ENCODE measurements at regions of chr5 and their contacts with region 1.

Region 1: GRCh38 chr5:98651715-98652114 is 121.7 kb upstream of the RGMB start:
- DNase-seq: no peak
- ATAC-seq: no peak
- H3K4me3 ChIP-seq: no peak overlapping the region
- H3K27ac ChIP-seq: no peak overlapping the region
- H3K4me1 ChIP-seq: no peaks in the 10 kb centered on the region
- H3K27me3 ChIP-seq: no peaks in the 10 kb centered on the region

Region 2: GRCh38 chr5:98663521-98663920 is 11.8 kb after region 1 on chr5:
- intact Hi-C with region 1: loop called in 1 of 4 experiments (anchors 2 kb)
- DNase-seq: peak in 1 of 3 donors; percentile 16
- ATAC-seq: no peak
- H3K4me3 ChIP-seq: no peak overlapping the region
- H3K27ac ChIP-seq: no peak overlapping the region
- H3K4me1 ChIP-seq: no peaks in the 10 kb centered on the region
- H3K27me3 ChIP-seq: no peaks in the 10 kb centered on the region